ENCODE measurements at regions of chr11 and their contacts with region 1.

Region 1: GRCh38 chr11:119030329-119031049 is at the start of gene SLC37A4:
- DNase-seq: peak; percentile 97
- H3K4me3 Mint-ChIP-seq: peak within 1 kb of the TSS; percentile 76
- H3K27ac Mint-ChIP-seq: peak within 1 kb of the TSS; percentile 50
- H3K4me1 Mint-ChIP-seq: peaks cover 24% of the 10 kb centered on the region
- H3K27me3 Mint-ChIP-seq: no peaks in the 10 kb centered on the region
- CTCF ChIP-seq: peak; percentile 61
- total RNA-seq, gene SLC37A4: 21.2 and 24.6 TPM in 2 replicates

Region 2: DNA sequence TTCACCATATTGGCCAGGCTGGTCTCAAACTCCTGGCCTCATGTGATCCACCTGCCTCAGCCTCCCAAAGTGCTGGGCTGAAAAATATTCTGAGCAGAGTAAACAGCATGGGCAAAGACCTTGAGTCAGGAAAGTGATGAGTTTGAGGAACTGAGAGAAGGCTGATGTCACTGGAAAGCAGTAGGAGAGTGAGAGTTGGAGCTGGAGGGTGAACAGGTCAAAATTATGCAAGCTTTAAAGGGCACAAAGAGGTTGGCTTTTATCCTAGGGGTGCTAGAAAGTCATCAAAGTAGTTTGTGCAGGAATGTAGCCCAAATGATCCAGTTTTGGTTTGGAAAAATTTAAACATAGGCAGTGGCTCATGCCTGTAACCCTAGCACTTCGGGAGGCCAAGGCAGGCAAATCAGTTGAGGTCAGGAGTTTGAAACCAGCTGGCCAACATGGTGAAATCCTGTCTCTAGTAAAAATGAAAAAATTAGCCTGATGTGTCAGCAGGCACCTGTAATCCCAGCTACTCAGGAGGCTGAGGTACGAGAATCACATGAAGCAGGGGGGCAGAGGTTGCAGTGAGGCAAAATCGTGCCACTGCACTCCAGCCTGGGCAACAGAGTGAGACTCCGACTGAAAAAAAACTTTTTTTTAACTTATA is 191.5 kb before region 1 on chr11:
- CTCF ChIA-PET with region 1: interaction called, 14 read pairs
- intact Hi-C with region 1: no loop called
- DNase-seq: no peak
- H3K4me3 Mint-ChIP-seq: no peak overlapping the region
- H3K27ac Mint-ChIP-seq: no peak overlapping the region
- H3K4me1 Mint-ChIP-seq: peaks cover 11% of the 10 kb centered on the region
- H3K27me3 Mint-ChIP-seq: no peaks in the 10 kb centered on the region
- CTCF ChIP-seq: no peak

Region 3: GRCh38 chr11:119101759-119102423 is 71.4 kb after region 1 on chr11 and contains the start of gene DPAGT1:
- CTCF ChIA-PET with region 1: no interaction called
- intact Hi-C with region 1: no loop called
- DNase-seq: peak; percentile 80
- H3K4me3 Mint-ChIP-seq: peak within 1 kb of the TSS; percentile 88
- H3K27ac Mint-ChIP-seq: peak within 1 kb of the TSS; percentile 98
- H3K4me1 Mint-ChIP-seq: peaks cover 9% of the 10 kb centered on the region
- H3K27me3 Mint-ChIP-seq: no peaks in the 10 kb centered on the region
- CTCF ChIP-seq: no peak
- total RNA-seq, gene DPAGT1: 46.7 and 47.6 TPM in 2 replicates

Region 4: DNA sequence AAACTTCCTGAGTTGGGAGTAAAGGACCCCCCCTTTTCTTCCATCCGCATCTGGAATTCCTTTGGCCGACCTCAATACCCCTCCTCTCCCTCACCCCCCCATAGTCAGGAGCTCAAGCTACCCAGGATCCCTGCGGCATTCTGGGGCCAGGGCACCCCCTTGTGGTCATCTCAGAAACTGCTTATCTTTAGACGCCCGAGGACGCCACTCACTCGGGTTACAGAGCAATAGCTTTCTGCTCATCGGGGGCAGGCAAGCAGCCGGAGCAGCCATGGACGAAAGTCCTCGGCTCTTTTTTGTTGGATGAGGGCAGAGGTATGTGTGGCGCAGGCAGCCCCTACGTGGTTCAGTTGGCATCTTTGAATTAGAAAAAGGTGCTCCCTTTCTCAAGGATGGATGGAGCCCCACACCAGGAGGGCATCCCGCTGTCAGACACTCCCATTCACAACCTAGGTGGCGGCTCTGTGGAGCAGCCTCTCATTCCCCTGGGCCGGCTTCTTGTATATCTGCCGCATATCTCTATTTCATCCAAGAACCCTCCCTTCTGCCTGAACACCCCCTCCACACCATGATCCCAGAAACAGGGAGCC is 307.9 kb after region 1 on chr11:
- CTCF ChIA-PET with region 1: no interaction called
- intact Hi-C with region 1: no loop called
- DNase-seq: peak; percentile 74
- H3K4me3 Mint-ChIP-seq: no peak overlapping the region
- H3K27ac Mint-ChIP-seq: no peak overlapping the region
- H3K4me1 Mint-ChIP-seq: peaks cover 8% of the 10 kb centered on the region
- H3K27me3 Mint-ChIP-seq: peaks cover 29% of the 10 kb centered on the region
- CTCF ChIP-seq: peak; percentile 42

Measured in Calu3 (cell line).